ENCODE measurements at regions of chr16 and their contacts with region 1.

Region 1: GRCh38 chr16:48535831-48536613 is 74.0 kb downstream of the N4BP1 start:
- DNase-seq: no peak

Region 2: GRCh38 chr16:48385272-48386150 is 150.5 kb before region 1 on chr16 and contains the start of gene SIAH1:
- intact Hi-C with region 1: loop called (anchors 10 kb)
- DNase-seq: peak; percentile 94
- total RNA-seq, gene SIAH1: 13.8 TPM

Region 3: DNA sequence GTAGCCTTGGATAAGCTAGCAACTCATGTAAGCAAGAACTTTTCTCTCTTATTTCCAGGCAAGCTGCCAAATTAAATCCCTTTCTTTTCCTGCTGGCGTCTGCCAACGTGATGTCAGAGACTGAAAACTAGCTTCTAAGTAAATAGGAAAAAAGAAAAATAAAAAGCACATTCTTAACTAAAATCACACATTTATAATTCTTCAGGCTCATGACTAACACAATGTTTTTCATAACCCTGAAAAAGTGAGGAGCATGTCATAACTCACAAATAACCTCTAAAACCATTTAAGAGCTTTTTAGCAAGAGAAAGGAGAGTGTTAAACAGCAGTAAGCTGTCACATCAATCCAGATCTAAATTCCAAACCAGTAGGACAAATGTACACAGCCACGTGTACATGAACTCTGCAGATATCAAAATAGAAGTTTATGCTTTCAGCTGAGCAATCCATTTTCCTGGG is 36.1 kb before region 1 on chr16:
- intact Hi-C with region 1: no loop called
- DNase-seq: no peak

Region 4: GRCh38 chr16:48523035-48523809 is 12.8 kb before region 1 on chr16:
- intact Hi-C with region 1: no loop called
- DNase-seq: peak; percentile 41

Region 5: DNA sequence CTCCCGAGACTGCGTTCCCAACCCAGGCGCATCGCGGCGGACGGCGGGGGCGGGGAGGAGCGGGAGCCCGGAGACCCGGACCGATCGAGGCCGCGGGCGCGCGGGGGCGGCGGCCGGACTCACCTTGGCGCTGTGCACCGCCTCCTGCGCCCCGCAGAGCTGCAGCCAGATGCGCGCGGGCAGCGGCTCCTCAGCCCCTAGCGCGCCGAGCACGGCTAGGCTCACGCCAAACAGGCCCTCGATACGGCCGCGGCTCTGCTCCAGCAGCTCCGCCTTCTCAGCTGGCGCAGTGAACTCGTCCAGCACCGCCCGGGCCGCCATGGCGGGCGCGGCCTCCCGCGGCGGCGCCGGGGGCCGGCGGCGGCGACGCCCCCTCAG is 73.6 kb after region 1 on chr16:
- intact Hi-C with region 1: loop called (anchors 5 kb)
- DNase-seq: peak; percentile 82

Region 6: DNA sequence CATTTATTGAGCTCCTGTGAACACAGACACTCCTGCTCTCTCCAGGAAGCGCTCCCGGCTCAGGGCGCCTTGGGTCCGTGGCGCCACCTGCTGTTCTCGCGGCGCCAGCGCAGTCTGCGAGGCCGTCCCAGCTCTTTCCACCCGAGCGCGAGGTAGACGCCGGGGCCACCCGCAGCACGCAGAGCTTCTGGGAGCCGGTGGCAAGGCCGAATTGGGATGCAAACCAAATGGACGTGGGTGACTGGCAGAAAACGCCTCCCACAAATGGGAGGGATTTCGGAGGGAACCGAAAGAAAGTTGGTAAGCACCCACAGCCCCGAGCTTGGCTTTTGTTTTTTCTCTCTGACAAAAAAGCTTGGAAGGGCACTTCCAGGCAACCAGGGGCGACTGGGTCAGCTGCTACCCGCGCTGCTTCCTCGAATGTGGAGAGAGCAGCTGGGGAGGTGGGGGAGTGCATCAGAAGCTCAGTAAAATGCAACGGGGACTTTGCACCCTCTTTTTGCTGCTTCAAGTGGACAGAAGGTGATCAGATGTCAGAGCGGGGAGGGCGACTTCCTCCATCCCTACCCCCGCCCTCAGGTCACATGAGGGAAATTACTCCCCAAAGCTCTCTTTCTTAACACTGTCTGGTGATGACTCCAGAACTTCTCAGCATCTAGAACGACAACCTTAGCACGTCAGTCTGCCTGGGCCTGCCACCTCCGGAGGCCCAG is 87.4 kb after region 1 on chr16:
- intact Hi-C with region 1: loop called (anchors 5 kb)
- DNase-seq: peak; percentile 95